Activated CD4-positive, alpha-beta T cell treated with anti-CD3 and anti-CD28 coated beads, Interleukin-2, amount 10 ng/mL, durations not matched to agents 24 days and 14 days (primary cell): ENCODE measurements at regions of chr6 and their contacts with region 1.

Region 1: DNA sequence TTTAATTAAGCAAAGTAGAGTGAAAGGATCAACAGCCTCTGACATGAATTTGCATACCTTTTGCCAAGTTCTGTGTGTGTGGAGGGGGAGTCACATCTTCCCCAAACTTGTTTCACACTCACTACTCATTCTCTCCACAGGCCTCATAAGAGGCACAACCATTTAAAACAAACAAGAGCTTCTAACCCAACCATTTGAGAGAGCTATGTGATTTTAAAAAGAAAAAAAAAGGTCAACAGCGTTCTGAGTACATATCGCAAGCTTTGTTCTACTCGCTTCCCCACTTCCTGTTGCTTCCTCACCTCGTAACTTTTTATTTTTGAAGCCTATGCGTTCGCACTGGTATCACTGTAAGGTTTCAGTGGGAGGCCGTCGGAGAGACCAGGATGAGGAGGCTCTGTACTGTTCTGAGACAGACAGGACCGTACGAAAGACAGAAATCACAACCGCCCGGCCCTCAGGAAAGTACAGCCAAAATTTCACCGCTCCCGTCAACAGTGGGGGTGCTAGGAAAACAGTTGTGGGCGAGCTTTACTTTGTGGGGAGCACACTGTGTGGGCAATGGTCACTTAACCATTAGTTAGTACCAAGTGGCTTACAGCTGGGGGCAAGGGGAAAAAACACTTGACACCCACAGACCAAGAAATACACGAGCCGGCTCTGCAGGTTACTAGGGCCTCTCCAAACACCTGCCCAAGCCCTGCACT is 61.3 kb downstream of the TRERF1 start:
- DNase-seq: peak; percentile 87
- H3K4me3 Mint-ChIP-seq: peak overlapping the region; percentile 84
- H3K27ac Mint-ChIP-seq: peak overlapping the region; percentile 100
- H3K4me1 Mint-ChIP-seq: peaks cover 79% of the 10 kb centered on the region
- H3K27me3 Mint-ChIP-seq: no peaks in the 10 kb centered on the region

Region 2: GRCh38 chr6:42339991-42340401 is 50.4 kb before region 1 on chr6:
- intact Hi-C with region 1: loop called (anchors 1 kb)
- DNase-seq: peak; percentile 78
- H3K4me3 Mint-ChIP-seq: peak overlapping the region; percentile 65
- H3K27ac Mint-ChIP-seq: peak overlapping the region; percentile 94
- H3K4me1 Mint-ChIP-seq: peaks cover 75% of the 10 kb centered on the region
- H3K27me3 Mint-ChIP-seq: no peaks in the 10 kb centered on the region

Region 3: DNA sequence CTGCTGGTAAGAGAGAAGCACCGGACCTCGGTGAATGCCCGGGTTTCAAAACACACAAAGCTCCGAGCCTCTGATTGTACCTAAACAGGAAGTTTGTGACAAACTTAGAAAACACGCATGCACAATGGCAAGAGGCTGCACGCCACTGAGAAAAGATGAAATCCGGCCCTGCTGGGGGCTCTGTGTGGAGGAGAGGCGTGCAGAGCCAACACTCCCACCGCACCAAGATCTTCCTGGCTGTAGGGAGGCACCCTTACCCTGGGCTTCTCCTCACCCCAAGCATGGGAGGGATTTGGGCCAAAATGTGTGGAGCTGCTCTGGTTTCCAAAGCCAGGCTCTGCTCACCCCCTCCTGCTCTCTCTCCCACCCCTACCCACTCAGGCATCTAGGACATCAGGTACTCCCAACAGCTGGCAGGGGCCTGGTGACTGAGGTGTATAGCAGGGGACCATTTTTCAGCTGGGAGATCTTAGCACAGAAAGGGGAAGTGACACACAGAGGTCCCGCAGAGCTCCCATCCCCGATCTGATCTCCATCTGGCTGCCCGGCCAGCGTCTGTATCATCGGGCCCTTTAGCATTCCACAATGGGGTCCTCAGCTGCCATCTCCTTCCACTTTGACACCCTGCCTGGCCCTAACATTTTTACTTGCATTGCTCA is 22.9 kb before region 1 on chr6:
- intact Hi-C with region 1: loop called (anchors 1 kb)
- DNase-seq: peak; percentile 82
- H3K4me3 Mint-ChIP-seq: peak overlapping the region; percentile 72
- H3K27ac Mint-ChIP-seq: peak overlapping the region; percentile 89
- H3K4me1 Mint-ChIP-seq: peaks cover 71% of the 10 kb centered on the region
- H3K27me3 Mint-ChIP-seq: no peaks in the 10 kb centered on the region

Region 4: GRCh38 chr6:42402184-42402583 is 11.8 kb after region 1 on chr6:
- intact Hi-C with region 1: loop called (anchors 1 kb)
- DNase-seq: peak; percentile 84
- H3K4me3 Mint-ChIP-seq: peak overlapping the region; percentile 49
- H3K27ac Mint-ChIP-seq: peak overlapping the region; percentile 84
- H3K4me1 Mint-ChIP-seq: peaks cover 61% of the 10 kb centered on the region
- H3K27me3 Mint-ChIP-seq: no peaks in the 10 kb centered on the region

Region 5: DNA sequence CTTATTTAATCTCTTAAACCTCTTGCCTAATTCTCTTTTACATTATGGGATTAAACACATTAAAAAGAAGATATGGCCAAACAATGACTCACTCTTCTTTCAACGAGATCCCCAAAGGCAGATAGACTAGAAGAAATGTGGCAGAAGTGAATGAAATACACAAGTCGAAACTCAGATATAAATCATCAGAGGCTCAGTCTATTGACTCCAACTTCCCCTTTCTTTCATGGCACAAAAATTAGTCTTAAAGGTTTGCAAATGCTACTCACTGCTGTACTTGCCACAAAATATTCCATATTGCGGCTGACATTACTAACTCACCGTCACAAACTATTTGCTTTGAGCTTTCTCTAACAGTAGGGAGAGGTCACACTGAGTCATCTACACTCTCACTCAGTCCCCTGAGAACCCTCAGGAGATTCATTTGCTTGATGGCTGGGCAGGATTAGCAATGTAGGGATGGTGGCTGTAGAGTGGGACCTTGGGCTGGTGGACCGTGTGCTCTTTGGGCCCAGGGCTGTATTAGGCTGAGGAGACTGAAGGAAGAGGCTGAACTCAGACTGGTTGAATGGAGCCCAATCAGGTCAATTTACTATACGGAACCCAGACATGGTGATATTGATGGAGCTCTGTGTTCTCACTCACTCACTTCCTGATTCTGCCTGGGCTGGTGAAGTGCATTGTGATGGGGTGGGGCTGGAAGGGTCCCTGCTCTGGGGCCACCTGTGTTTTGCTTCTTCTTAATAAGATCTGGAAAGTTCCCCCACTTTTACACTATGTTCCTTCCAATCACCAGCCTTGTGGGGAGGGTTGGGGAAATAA is 130.6 kb after region 1 on chr6:
- intact Hi-C with region 1: loop called (anchors 1 kb)
- DNase-seq: peak; percentile 55
- H3K4me3 Mint-ChIP-seq: no peak overlapping the region
- H3K27ac Mint-ChIP-seq: peak overlapping the region; percentile 89
- H3K4me1 Mint-ChIP-seq: peaks cover 10% of the 10 kb centered on the region
- H3K27me3 Mint-ChIP-seq: peaks cover 4% of the 10 kb centered on the region